Breast epithelium (tissue), 4 donors: ENCODE measurements at regions of chrX and their contacts with region 1.

Region 1: DNA sequence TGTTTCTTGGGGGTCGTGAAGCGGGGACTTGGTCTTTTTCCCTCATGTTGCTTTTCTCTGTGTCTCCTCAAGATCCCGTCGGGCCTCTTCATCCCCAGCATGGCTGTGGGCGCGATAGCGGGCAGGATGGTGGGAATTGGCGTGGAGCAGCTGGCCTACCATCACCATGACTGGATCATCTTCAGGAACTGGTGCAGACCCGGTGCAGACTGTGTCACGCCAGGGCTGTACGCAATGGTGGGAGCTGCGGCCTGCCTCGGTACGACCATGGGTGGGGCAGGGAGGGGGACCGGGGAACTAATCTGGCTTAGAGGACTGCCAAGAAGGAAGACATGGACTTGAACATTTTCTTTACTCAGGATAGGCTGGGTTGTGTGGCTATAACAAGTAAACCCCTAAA is 55.6 kb downstream of the CLCN4 start:
- DNase-seq: no peak
- H3K4me3 ChIP-seq: no peak overlapping the region
- H3K27ac ChIP-seq: no peak overlapping the region
- H3K4me1 ChIP-seq: no peaks in the 10 kb centered on the region
- H3K27me3 ChIP-seq: peaks cover 0 to 38% of the 10 kb centered on the region in 2 donors
- CTCF ChIP-seq: no peak
- POLR2A ChIP-seq: no peak

Region 2: DNA sequence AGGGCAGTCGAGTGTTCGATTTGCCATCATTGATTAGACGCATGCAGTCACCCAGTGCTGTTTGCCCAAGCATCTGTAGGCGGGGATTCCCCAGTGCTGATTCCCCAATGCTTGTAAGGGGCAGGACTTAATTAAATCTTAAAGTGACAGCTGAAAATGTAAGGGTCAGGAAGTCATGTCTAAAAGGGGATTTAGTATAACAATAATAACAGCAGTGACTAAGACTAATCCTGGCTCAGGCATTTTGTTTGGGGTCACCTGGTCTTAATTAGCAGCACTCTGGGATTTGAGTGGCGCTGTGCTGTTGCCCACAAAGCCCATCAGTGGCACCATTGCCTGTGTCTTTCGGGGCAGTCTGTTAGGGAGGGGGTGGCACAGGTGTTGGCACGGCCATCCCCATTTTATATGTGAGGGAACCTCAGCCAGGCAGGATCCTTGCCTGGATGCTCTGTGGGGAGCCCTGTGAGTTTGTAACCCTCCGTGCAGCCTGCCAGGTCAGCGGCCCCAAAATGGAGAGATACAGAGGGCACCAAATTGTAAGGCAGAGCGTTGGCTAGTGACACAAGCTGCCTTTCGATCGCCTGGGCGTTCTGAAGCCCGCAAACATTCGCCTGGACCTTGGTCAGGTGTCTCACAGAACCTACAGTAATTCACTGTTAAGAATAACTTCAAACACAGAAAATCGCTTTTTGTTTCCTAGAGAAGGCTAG is 600.8 kb before region 1 on chrX:
- intact Hi-C with region 1: no loop called
- DNase-seq: no peak
- H3K4me3 ChIP-seq: no peak overlapping the region
- H3K27ac ChIP-seq: no peak overlapping the region
- H3K4me1 ChIP-seq: no peaks in the 10 kb centered on the region
- H3K27me3 ChIP-seq: peaks cover 0 to 5% of the 10 kb centered on the region in 2 donors
- CTCF ChIP-seq: no peak
- POLR2A ChIP-seq: no peak

Region 3: DNA sequence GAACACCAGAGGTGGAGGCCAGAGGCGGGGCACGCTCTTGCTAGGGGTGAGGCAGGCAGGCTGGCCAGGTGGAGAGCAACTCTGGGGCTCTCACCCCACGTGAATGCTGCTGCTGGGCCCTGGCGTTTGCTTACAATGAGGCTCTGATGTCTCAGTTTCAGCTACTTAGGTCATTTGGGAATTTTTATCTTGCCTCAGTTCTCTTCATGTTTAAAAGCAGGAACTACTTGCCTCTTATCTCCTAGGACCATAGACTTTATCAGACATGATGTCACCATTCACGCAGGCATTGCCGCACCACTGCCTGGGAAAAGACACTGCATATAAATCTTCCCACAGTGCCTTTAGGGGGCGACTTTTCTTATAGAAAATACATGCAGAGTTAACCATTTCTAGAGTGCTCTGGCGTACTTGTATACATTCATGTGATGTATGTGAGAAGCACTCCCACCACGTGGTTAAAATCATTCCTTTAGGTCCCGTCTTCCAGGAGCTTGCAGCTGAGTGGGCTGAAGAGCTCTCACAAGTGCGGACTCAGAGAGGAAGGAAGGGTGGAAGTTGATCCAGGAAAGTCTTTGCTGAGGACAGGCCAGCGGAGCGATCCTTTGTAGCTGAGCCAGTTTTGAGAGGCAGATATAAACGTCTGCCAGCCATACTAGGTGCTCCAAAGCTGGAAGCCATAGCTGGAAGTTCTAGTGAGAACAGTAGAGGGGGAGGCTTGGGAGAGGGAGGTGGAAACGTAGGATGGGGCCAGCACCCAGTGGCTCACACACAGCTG is 329.5 kb before region 1 on chrX:
- intact Hi-C with region 1: loop called (anchors 5 kb)
- DNase-seq: no peak
- H3K4me3 ChIP-seq: no peak overlapping the region
- H3K27ac ChIP-seq: no peak overlapping the region
- H3K4me1 ChIP-seq: no peaks in the 10 kb centered on the region
- H3K27me3 ChIP-seq: peaks cover 0 to 25% of the 10 kb centered on the region in 2 donors
- CTCF ChIP-seq: no peak
- POLR2A ChIP-seq: no peak

Region 4: DNA sequence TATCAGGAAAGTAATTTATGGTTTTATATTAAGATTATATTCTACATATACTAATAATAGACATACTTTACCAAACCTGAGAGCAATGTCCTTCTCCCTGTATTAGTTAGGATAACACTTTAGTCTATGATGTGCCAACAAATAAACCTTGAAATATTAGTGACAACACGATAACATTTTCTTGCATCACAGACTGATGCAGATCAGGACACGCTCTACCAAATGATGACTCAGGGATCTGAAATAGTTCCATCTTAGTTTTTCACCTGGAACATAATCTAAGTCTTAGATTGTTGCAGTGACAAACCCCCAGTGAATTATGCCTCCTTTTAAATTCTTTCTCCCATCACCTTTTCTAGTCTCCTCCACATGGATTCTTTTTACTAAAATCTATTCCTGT is 158.6 kb after region 1 on chrX:
- intact Hi-C with region 1: no loop called
- DNase-seq: no peak
- H3K4me3 ChIP-seq: no peak overlapping the region
- H3K27ac ChIP-seq: no peak overlapping the region
- H3K4me1 ChIP-seq: no peaks in the 10 kb centered on the region
- H3K27me3 ChIP-seq: peaks cover 0 to 9% of the 10 kb centered on the region in 2 donors
- CTCF ChIP-seq: no peak
- POLR2A ChIP-seq: no peak